ENCODE measurements at regions of chr13 and their contacts with region 1.

Region 1: DNA sequence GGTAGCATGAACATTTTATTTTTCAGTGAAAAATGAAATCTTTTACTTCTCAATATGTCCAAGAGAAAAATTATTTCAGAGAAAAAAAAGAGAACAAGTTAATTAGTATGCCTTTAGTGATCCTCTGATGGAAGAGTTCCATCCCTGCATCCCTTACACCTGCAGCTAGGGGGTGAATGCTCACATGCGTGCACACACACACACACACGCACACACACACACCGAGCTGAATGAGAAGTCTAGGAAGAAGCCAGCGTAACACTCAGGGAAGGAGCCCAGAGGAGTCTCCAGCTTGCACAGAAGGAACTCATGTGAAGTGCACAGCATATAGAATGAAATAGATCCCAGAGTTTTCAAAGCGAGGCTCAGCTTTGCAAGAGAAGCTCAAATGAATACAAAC is 510.5 kb downstream of the IRS2 start:
- DNase-seq: no peak
- H3K4me3 ChIP-seq: no peak overlapping the region
- H3K27ac ChIP-seq: no peak overlapping the region
- H3K4me1 ChIP-seq: peaks cover 27% of the 10 kb centered on the region
- H3K27me3 ChIP-seq: no peaks in the 10 kb centered on the region
- CTCF ChIP-seq: no peak
- POLR2A ChIP-seq: no peak

Region 2: GRCh38 chr13:109198585-109198984 is 77.3 kb before region 1 on chr13:
- CTCF ChIA-PET with region 1: no interaction called
- POLR2A ChIA-PET with region 1: no interaction called
- dilution Hi-C with region 1: no loop called
- intact Hi-C with region 1: loop called (anchors 1 kb)
- DNase-seq: peak; percentile 6
- H3K4me3 ChIP-seq: no peak overlapping the region
- H3K27ac ChIP-seq: peak overlapping the region; percentile 7
- H3K4me1 ChIP-seq: peaks cover 18% of the 10 kb centered on the region
- H3K27me3 ChIP-seq: no peaks in the 10 kb centered on the region
- CTCF ChIP-seq: no peak
- POLR2A ChIP-seq: no peak

Region 3: GRCh38 chr13:109243311-109243951 is 32.4 kb before region 1 on chr13:
- CTCF ChIA-PET with region 1: no interaction called
- POLR2A ChIA-PET with region 1: interaction called, 3 read pairs
- dilution Hi-C with region 1: no loop called
- intact Hi-C with region 1: loop called (anchors 1 kb)
- DNase-seq: peak; percentile 78
- H3K4me3 ChIP-seq: no peak overlapping the region
- H3K27ac ChIP-seq: peak overlapping the region; percentile 84
- H3K4me1 ChIP-seq: peaks cover 27% of the 10 kb centered on the region
- H3K27me3 ChIP-seq: no peaks in the 10 kb centered on the region
- CTCF ChIP-seq: no peak
- POLR2A ChIP-seq: no peak

Region 4: GRCh38 chr13:109344552-109345157 is 68.8 kb after region 1 on chr13:
- CTCF ChIA-PET with region 1: no interaction called
- POLR2A ChIA-PET with region 1: no interaction called
- dilution Hi-C with region 1: no loop called
- intact Hi-C with region 1: loop called (anchors 1 kb)
- DNase-seq: peak; percentile 67
- H3K4me3 ChIP-seq: no peak overlapping the region
- H3K27ac ChIP-seq: peak overlapping the region; percentile 90
- H3K4me1 ChIP-seq: peaks cover 40% of the 10 kb centered on the region
- H3K27me3 ChIP-seq: no peaks in the 10 kb centered on the region
- CTCF ChIP-seq: no peak
- POLR2A ChIP-seq: no peak

Region 5: GRCh38 chr13:109383670-109384069 is 107.8 kb after region 1 on chr13:
- CTCF ChIA-PET with region 1: no interaction called
- POLR2A ChIA-PET with region 1: no interaction called
- dilution Hi-C with region 1: no loop called
- intact Hi-C with region 1: no loop called
- DNase-seq: peak; percentile 4
- H3K4me3 ChIP-seq: no peak overlapping the region
- H3K27ac ChIP-seq: no peak overlapping the region
- H3K4me1 ChIP-seq: no peaks in the 10 kb centered on the region
- H3K27me3 ChIP-seq: no peaks in the 10 kb centered on the region
- CTCF ChIP-seq: no peak
- POLR2A ChIP-seq: no peak

Measured in endothelial cell of umbilical vein (primary cell).